ENCODE measurements at regions of chr2 and their contacts with region 1.

Region 1: DNA sequence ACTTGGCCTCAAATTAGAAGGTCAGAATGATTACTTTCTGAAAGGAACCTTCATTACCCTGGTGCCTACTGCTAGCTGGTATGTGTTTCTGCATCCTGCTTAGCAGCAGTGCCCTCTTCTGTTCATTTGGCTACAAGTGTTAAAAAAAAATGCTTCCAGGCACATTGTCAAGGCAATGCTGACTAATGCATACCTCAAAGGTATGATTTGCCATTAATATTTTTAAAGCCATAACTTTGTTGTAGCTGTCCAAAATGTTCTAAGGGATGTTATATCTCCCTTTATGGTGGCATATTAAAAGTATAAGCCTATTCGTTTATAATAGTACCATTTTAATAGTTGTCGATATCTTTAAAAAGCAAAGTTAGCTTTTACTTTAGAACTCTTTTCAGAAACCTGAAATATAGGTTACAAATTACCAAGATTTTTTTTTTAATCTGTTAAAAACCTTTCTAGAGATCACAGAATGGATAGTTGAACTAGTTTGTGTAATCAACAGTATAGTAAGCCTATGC is 52.0 kb upstream of the FAM171B start:
- DNase-seq: peak; percentile 57
- H3K27ac ChIP-seq: no peak overlapping the region
- CTCF ChIP-seq: peak; percentile 81

Region 2: DNA sequence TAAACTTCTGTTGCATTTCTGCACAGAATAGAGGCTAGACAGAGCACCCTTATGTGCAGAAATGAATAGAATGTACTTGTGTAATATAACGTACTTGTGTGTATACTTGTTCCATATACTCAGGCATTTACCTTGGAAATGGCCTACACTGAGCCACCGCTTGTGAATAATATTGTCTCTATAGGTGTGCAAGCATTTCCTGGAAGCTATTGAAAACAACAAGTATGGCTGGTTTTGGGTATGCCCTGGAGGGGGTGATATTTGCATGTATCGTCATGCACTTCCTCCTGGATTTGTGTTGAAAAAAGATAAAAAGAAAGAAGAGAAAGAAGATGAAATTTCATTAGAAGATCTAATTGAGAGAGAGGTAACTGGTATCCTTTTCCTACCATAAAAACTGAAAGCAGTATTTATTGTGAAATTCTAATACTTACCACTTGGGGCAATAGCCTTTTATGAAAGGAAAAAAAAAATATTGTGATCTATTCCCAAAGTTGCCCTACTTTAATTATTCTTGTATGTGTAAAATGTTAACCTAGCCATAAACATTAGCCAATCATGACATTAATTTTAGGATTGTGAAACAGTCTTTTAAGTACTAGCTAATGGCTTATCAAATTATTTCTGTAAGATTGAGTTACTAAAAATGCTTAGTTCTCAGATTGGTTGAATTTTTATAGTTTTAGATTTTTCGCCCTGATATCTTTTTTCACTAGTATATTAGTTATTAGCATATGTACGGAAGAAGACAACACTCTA is 137.8 kb before region 1 on chr2:
- CTCF ChIA-PET with region 1: interaction called, 38 read pairs
- POLR2A ChIA-PET with region 1: no interaction called
- DNase-seq: peak; percentile 26
- H3K27ac ChIP-seq: no peak overlapping the region
- CTCF ChIP-seq: peak; percentile 76

Region 3: DNA sequence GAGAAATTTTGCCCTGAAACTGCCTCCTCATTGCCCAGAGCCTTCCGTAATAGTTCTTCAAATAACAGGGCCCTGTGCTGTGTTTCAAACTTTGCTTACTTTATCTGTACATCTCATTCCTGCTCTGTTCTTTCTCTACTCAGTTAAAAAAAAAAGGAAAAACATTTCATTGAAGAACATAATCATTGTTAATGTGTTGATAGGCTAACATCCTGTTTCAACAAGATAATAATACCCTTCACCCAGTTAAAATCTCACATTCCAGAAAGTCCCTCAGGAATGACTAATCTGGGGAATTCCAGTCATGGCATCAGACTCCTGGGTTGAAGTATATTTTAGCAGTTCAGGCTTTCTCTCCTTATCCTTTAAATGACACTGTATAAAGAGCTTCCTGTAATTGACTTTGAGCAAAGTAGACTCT is 97.6 kb before region 1 on chr2:
- CTCF ChIA-PET with region 1: no interaction called
- POLR2A ChIA-PET with region 1: no interaction called
- DNase-seq: peak; percentile 86
- H3K27ac ChIP-seq: no peak overlapping the region
- CTCF ChIP-seq: no peak

Region 4: GRCh38 chr2:186589612-186590349 is 52.1 kb before region 1 on chr2 and contains the start of gene ITGAV:
- CTCF ChIA-PET with region 1: interaction called, 15 read pairs
- POLR2A ChIA-PET with region 1: no interaction called
- DNase-seq: peak; percentile 89
- H3K27ac ChIP-seq: peak within 1 kb of the TSS; percentile 95
- CTCF ChIP-seq: no peak

Measured in RWPE1 (cell line).